ENCODE measurements at regions of chr15 and their contacts with region 1.

Region 1: DNA sequence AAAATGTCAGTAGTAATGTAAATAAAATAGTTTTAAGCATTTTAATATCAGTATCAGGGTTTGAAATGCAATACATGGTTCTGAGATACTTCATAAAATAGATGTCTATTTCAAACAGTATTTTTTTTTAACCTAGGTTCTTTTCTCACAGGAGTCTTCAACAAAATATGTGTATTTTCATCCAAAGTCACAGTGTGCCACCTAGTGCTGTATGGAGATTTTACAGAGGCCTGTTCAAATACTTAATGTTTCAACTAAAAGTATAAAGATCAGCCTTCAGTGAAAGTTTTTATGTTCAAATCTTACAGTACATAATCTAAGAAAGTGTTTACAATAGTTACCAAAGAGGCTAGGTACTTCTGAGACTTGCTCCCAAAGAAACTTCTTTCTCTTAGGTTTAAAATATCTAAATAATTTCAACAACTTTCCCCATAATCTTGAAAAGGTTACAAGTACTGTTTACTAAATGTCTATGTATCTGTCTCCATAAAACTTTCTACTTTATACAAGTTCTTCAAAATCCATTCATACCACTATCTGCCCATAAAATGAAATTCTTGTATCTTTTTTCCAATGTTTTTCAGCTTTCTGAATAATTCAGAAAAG is 38.3 kb downstream of the SCAPER start:
- DNase-seq: no peak
- H3K4me3 ChIP-seq: no peak overlapping the region
- H3K27ac ChIP-seq: no peak overlapping the region
- H3K4me1 ChIP-seq: peaks cover 2% of the 10 kb centered on the region
- H3K27me3 ChIP-seq: no peaks in the 10 kb centered on the region
- CTCF ChIP-seq: peak in 2 of 3 donors; percentile 8 to 17
- EP300 ChIP-seq: no peak
- POLR2A ChIP-seq: no peak

Region 2: DNA sequence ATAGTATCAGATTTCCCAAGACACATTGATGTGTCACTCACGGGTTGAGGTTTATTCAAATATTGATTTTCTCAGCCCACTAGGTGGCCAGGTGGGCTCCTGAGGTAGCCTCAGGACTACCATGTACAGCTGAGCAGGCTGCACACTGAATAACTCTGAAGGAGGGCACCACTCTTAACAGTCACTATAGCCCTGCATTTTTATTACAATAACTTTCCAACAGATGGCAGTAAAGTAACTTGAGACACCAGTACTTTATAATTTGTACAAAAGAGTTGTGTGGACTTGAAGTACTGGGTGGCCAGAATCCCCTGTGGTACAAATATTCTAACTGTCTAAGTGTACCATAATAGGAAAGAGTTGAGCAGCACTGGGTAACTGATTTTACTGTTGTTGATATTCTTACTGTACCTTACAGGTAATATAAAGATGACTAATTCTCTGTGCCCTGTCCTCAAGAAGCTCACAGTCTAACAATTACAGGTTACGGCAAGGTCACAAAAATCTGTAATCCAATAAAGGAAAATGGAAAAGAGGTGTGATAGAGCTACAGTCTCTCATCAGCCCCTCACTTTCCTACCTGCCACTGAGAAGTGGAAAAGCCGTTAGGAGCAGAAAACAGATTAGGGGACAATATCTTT is 631.5 kb before region 1 on chr15:
- intact Hi-C with region 1: loop called in 1 of 4 experiments (anchors 10 kb)
- DNase-seq: no peak
- H3K4me3 ChIP-seq: no peak overlapping the region
- H3K27ac ChIP-seq: no peak overlapping the region
- H3K4me1 ChIP-seq: no peaks in the 10 kb centered on the region
- H3K27me3 ChIP-seq: no peaks in the 10 kb centered on the region
- CTCF ChIP-seq: peak in 1 of 3 donors; percentile 17
- EP300 ChIP-seq: no peak
- POLR2A ChIP-seq: no peak

Region 3: DNA sequence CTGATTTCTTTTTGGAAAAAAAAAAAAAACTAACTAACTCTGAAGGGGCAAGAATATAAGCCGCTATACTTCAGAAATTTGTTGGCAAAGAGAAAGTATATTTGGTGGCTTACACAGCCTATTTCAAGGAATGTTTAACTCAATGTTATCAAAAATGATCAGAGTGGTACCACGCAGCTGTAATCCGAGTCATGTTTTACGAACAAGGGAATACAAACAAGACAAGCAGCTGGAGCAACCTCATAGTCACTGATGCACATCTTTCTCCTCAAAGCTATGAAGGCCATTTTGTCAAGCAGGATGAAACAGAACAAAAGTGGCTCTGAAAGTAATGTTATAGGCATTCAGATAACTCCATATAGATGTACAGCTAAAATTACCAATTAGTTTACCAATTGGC is 42.9 kb before region 1 on chr15:
- intact Hi-C with region 1: no loop called
- DNase-seq: no peak
- H3K4me3 ChIP-seq: no peak overlapping the region
- H3K27ac ChIP-seq: no peak overlapping the region
- H3K4me1 ChIP-seq: no peaks in the 10 kb centered on the region
- H3K27me3 ChIP-seq: no peaks in the 10 kb centered on the region
- CTCF ChIP-seq: no peak
- EP300 ChIP-seq: no peak
- POLR2A ChIP-seq: no peak

Region 4: GRCh38 chr15:77002954-77003912 is 136.4 kb after region 1 on chr15:
- intact Hi-C with region 1: no loop called
- DNase-seq: no peak
- H3K4me3 ChIP-seq: no peak overlapping the region
- H3K27ac ChIP-seq: no peak overlapping the region
- H3K4me1 ChIP-seq: no peaks in the 10 kb centered on the region
- H3K27me3 ChIP-seq: no peaks in the 10 kb centered on the region
- CTCF ChIP-seq: no peak
- EP300 ChIP-seq: no peak
- POLR2A ChIP-seq: no peak

Measured in ovary (tissue), 10 donors.